ENCODE measurements at regions of chr16 and their contacts with region 1.

Region 1: GRCh38 chr16:56637814-56638750 is at the start of gene MT1A:
- DNase-seq: peak; percentile 89
- ATAC-seq: peak; percentile 89 to 90
- total RNA-seq, gene MT1A: 19.0 to 104 TPM

Region 2: GRCh38 chr16:56569801-56570370 is 68.2 kb before region 1 on chr16:
- intact Hi-C with region 1: no loop called
- DNase-seq: no peak
- ATAC-seq: no peak

Region 3: GRCh38 chr16:56657555-56658326 is 19.7 kb after region 1 on chr16 and contains the start of gene MT1F:
- intact Hi-C with region 1: loop called in 1 of 2 experiments (anchors 2 kb)
- DNase-seq: peak; percentile 78
- ATAC-seq: peak; percentile 90 to 96
- total RNA-seq, gene MT1F: 6.7 to 7.9 TPM

Measured in left cardiac atrium (tissue), 4 donors.